Heart right ventricle (tissue), 16 donors: ENCODE measurements at regions of chr11 and their contacts with region 1.

Region 1: GRCh38 chr11:74739546-74740270 is 8.5 kb upstream of the CHRDL2 start:
- DNase-seq: peak in 1 of 2 donors; percentile 28
- ATAC-seq: peak; percentile 57 to 93 (median 88)
- H3K4me3 ChIP-seq: no peak overlapping the region
- H3K27ac ChIP-seq: no peak overlapping the region
- H3K4me1 ChIP-seq: no peaks in the 10 kb centered on the region
- H3K27me3 ChIP-seq: peaks cover 0 to 9% (median 4%) of the 10 kb centered on the region in 7 donors
- CTCF ChIP-seq: peak; percentile 70 to 94 (median 89)

Region 2: GRCh38 chr11:74449369-74449931 is 290.3 kb before region 1 on chr11:
- intact Hi-C with region 1: loop called in 1 of 10 experiments (anchors 5 kb)
- DNase-seq: peak in 1 of 2 donors; percentile 77
- ATAC-seq: peak; percentile 74 to 91 (median 86)
- H3K4me3 ChIP-seq: no peak overlapping the region
- H3K27ac ChIP-seq: peak overlapping the region in 1 of 10 donors; percentile 49
- H3K4me1 ChIP-seq: peaks cover 0 to 19% (median 0%) of the 10 kb centered on the region in 9 donors
- H3K27me3 ChIP-seq: no peaks in the 10 kb centered on the region
- CTCF ChIP-seq: peak; percentile 51 to 80 (median 75)

Region 3: GRCh38 chr11:74492974-74493790 is 246.5 kb before region 1 on chr11 and contains the start of gene LIPT2:
- intact Hi-C with region 1: loop called in 1 of 10 experiments (anchors 10 kb)
- DNase-seq: peak; percentile 95 to 97
- ATAC-seq: peak; percentile 98 to 100 (median 99)
- H3K4me3 ChIP-seq: peak within 1 kb of the TSS; percentile 45 to 96 (median 84)
- H3K27ac ChIP-seq: peak within 1 kb of the TSS; percentile 93 to 99 (median 98)
- H3K4me1 ChIP-seq: peaks cover 0 to 20% (median 10%) of the 10 kb centered on the region in 9 donors
- H3K27me3 ChIP-seq: no peaks in the 10 kb centered on the region
- CTCF ChIP-seq: peak in 1 of 9 donors; percentile 16
- total RNA-seq, gene LIPT2: 1.0 to 3.8 (median 1.7) TPM

Region 4: DNA sequence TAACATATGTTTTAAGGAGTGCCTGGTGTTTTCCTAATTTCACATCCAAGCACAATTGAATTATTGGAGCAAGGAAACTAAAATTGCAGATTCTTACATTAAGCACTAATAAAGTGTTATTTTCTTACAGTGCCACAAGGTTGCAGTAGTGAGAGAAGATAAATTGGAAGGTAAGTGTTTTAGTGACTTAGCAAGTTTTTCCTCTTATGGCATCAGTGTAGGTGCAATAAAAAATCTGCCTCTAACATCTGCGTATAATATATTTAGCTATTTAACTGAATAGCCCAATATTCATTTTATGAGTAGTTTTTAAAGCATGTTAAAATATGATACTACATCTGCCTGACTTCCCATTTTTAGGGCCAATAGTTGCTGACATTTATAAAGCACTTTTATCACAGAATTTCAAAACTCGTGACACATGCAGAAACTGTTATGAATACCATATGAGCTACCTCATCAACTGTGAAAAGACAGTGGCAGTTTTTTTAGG is 128.3 kb before region 1 on chr11:
- intact Hi-C with region 1: loop called in 3 of 10 experiments (anchors 5 kb)
- DNase-seq: no peak
- ATAC-seq: peak in 3 of 8 donors; percentile 28 to 52 (median 42)
- H3K4me3 ChIP-seq: no peak overlapping the region
- H3K27ac ChIP-seq: peak overlapping the region in 2 of 10 donors; percentile 4 to 84
- H3K4me1 ChIP-seq: peaks cover 0 to 21% (median 0%) of the 10 kb centered on the region in 9 donors
- H3K27me3 ChIP-seq: no peaks in the 10 kb centered on the region
- CTCF ChIP-seq: peak in 7 of 9 donors; percentile 30 to 61 (median 47)

Region 5: GRCh38 chr11:74702383-74703007 is 37.2 kb before region 1 on chr11:
- intact Hi-C with region 1: loop called in 1 of 10 experiments (anchors 5 kb)
- DNase-seq: peak; percentile 56 to 60
- ATAC-seq: peak; percentile 29 to 76 (median 57)
- H3K4me3 ChIP-seq: no peak overlapping the region
- H3K27ac ChIP-seq: no peak overlapping the region
- H3K4me1 ChIP-seq: peaks cover 0 to 10% (median 5%) of the 10 kb centered on the region in 9 donors
- H3K27me3 ChIP-seq: no peaks in the 10 kb centered on the region
- CTCF ChIP-seq: peak; percentile 77 to 94 (median 90)

Region 6: GRCh38 chr11:75100314-75100713 is 360.6 kb after region 1 on chr11:
- intact Hi-C with region 1: no loop called
- DNase-seq: no peak
- ATAC-seq: peak in 1 of 8 donors; percentile 2
- H3K4me3 ChIP-seq: no peak overlapping the region
- H3K27ac ChIP-seq: no peak overlapping the region
- H3K4me1 ChIP-seq: no peaks in the 10 kb centered on the region
- H3K27me3 ChIP-seq: peaks cover 0 to 62% (median 13%) of the 10 kb centered on the region in 7 donors
- CTCF ChIP-seq: no peak

Region 7: DNA sequence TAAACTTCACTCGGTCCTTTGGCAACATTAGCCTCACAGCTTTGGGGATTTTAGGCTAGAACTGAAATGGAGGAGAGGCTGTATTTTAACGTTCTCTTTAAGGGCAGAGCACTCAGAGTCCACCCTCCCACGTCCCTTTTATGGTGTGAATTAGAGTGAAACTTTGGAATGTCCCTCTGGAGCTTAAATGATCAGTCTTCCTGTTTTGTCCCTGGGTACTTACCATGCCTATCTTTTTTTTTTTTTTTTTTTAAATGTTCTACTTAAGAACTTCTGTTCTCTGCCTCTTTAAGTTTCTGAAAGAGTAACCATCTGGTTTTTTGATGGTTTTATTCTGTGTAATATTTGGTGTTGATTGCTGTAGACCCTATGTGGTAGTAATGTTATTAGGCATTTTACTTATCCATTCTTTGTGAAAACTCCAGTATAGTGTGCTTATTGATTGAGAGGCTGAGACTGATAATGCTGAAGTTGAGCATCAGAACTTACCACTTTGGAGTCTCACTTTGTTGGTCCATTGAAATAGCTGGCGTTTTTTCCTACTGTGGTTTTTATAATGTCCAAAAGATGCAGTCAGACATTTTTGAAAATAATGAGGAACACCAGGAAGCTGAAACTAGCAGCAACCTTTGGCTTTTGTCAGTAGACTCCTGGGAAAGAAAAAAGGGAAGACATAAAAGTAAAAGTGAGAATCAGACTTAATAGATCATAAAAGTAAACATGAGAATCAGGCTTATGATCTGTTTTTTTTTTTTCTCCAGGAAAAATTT is 1086.9 kb after region 1 on chr11:
- intact Hi-C with region 1: no loop called
- DNase-seq: peak in 1 of 2 donors; percentile 29
- ATAC-seq: peak; percentile 80 to 95 (median 92)
- H3K4me3 ChIP-seq: peak overlapping the region in 7 of 10 donors; percentile 0 to 32 (median 18)
- H3K27ac ChIP-seq: peak overlapping the region; percentile 38 to 88 (median 79)
- H3K4me1 ChIP-seq: peaks cover 0 to 85% (median 47%) of the 10 kb centered on the region in 9 donors
- H3K27me3 ChIP-seq: no peaks in the 10 kb centered on the region
- CTCF ChIP-seq: no peak